Activated naive CD4-positive, alpha-beta T cell treated with anti-CD3 and anti-CD28 coated beads for 36 hours (primary cell): ENCODE measurements at regions of chr4 and their contacts with region 1.

Region 1: GRCh38 chr4:118034053-118034785 is at the start of gene NDST3:
- DNase-seq: peak; percentile 46
- H3K4me3 Mint-ChIP-seq: peak within 1 kb of the TSS; percentile 1
- H3K27ac Mint-ChIP-seq: no peak within 1 kb of the TSS
- H3K4me1 Mint-ChIP-seq: peaks cover 4% of the 10 kb centered on the region
- H3K27me3 Mint-ChIP-seq: peaks cover 35% of the 10 kb centered on the region
- total RNA-seq, gene NDST3: not detected

Region 2: GRCh38 chr4:116066711-116067245 is 1967.4 kb before region 1 on chr4:
- CTCF ChIA-PET with region 1: no interaction called
- intact Hi-C with region 1: loop called (anchors 10 kb)
- DNase-seq: no peak
- H3K4me3 Mint-ChIP-seq: no peak overlapping the region
- H3K27ac Mint-ChIP-seq: no peak overlapping the region
- H3K4me1 Mint-ChIP-seq: no peaks in the 10 kb centered on the region
- H3K27me3 Mint-ChIP-seq: no peaks in the 10 kb centered on the region

Region 3: DNA sequence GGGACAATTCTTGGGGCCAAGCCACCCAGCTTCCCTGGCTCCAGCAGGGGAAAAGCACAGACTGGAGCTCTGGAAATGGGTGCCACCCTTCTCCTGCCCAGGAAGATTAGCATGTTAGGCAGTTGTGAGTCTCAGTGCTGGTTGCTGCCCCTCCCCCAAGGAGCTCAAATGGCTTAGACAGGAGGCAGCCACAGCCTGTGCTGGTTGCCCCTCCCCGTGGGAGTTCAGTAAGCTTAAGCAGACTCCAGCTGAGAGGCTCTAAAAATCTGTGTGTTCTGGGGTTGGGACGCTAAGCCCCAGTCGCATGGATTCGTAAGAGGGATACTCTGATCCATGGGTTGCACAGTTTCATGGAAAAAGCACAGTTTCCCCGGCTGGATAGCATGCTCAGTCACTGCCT is 92.6 kb before region 1 on chr4:
- CTCF ChIA-PET with region 1: no interaction called
- intact Hi-C with region 1: no loop called
- DNase-seq: no peak
- H3K4me3 Mint-ChIP-seq: no peak overlapping the region
- H3K27ac Mint-ChIP-seq: no peak overlapping the region
- H3K4me1 Mint-ChIP-seq: no peaks in the 10 kb centered on the region
- H3K27me3 Mint-ChIP-seq: no peaks in the 10 kb centered on the region